H1 (cell line): ENCODE measurements at regions of chr2 and their contacts with region 1.

Region 1: GRCh38 chr2:160224060-160224459 is 24.0 kb upstream of the ITGB6 start:
- DNase-seq: no peak
- H3K4me3 ChIP-seq: no peak overlapping the region
- H3K27ac ChIP-seq: no peak overlapping the region
- H3K4me1 ChIP-seq: peaks cover 0 to 5% (median 5%) of the 10 kb centered on the region in 4 experiments; a peak in 3 of 7 replicates
- H3K27me3 ChIP-seq: no peaks in the 10 kb centered on the region
- CTCF ChIP-seq: no peak
- EP300 ChIP-seq: no peak
- POLR2A ChIP-seq: no peak
- RAD21 ChIP-seq: no peak

Region 2: GRCh38 chr2:160210599-160211138 is 13.4 kb before region 1 on chr2:
- CTCF ChIA-PET with region 1: interaction called, 32 read pairs
- POLR2A ChIA-PET with region 1: no interaction called
- DNase-seq: peak; percentile 36 to 89
- H3K4me3 ChIP-seq: no peak overlapping the region
- H3K27ac ChIP-seq: no peak overlapping the region
- H3K4me1 ChIP-seq: no peaks in the 10 kb centered on the region
- H3K27me3 ChIP-seq: no peaks in the 10 kb centered on the region
- CTCF ChIP-seq: peak; percentile 90 to 91 (median 91)
- EP300 ChIP-seq: no peak
- POLR2A ChIP-seq: no peak
- RAD21 ChIP-seq: peak; percentile 83 to 87